ENCODE measurements at regions of chr1 and their contacts with region 1.

Region 1: DNA sequence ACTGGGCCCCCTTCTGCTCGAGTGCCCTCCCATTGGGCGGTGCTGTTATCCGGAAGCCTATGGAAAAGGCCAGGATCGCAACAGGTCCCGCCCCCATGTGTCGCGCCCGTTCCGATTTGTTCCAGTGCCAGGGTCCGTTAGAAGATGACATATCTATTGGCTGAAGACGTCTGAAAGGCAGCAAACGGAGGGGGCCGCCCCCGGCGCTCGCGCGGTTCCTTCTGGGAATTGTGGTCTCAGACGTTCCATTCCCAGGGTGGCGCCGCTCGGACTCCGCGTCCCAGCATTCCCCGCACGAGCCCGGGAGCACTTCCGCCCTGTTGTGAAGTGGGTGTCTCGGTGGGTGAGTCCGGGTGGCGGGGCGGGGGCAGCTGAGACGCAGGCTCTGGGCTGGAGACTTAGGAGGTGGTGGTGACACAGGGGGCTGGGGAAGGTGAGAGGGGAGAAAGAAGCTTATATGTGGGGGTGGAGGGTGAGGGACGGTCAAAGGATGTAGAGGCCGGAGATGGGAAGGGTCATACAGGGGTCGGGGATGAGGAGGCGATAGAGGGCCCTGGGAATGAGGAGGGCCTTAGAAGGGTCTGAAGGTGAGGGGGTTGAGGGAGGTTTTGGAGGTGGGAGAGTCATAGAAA is at the start of gene ZSCAN20:
- DNase-seq: peak; percentile 98
- ATAC-seq: peak; percentile 89
- H3K4me3 ChIP-seq: peak within 1 kb of the TSS; percentile 77
- H3K27ac ChIP-seq: peak within 1 kb of the TSS; percentile 69
- H3K4me1 ChIP-seq: peaks cover 12% of the 10 kb centered on the region
- H3K27me3 ChIP-seq: no peaks in the 10 kb centered on the region
- CTCF ChIP-seq: no peak
- POLR2A ChIP-seq: peak; percentile 82
- RAD21 ChIP-seq: no peak
- total RNA-seq, gene ZSCAN20: 8.1 and 11.1 TPM in 2 replicates

Region 2: DNA sequence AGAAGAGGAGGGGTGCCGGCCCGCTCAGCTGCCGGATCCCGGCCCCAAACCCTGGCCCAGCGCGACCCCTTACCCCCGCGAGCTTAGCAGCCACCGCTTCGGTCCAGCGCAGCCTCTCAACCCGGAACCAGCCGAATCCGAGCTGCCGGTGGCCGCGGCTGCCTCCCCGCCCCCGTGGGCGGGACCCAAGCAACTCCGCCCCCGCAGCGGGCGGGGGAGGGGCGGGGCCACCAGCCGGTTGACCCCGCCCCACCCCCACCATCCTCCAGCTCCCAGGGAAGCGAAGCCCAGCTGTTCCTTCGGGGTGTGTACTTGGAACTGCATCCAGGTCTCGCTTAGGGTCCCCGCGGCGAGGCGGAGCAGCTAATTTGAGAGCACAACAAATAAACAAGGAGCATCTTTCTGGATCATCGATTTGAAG is 290.5 kb before region 1 on chr1 and contains the start of gene TRIM62:
- CTCF ChIA-PET with region 1: no interaction called
- POLR2A ChIA-PET with region 1: no interaction called
- dilution Hi-C with region 1: no loop called
- in situ Hi-C with region 1: no loop called
- intact Hi-C with region 1: loop called (anchors 5 kb)
- DNase-seq: peak; percentile 85
- ATAC-seq: peak; percentile 83
- H3K4me3 ChIP-seq: peak within 1 kb of the TSS; percentile 93
- H3K27ac ChIP-seq: peak within 1 kb of the TSS; percentile 58
- H3K4me1 ChIP-seq: peaks cover 5% of the 10 kb centered on the region
- H3K27me3 ChIP-seq: no peaks in the 10 kb centered on the region
- CTCF ChIP-seq: no peak
- POLR2A ChIP-seq: no peak
- RAD21 ChIP-seq: no peak
- total RNA-seq, gene TRIM62: 2.8 and 3.0 TPM in 2 replicates

Region 3: DNA sequence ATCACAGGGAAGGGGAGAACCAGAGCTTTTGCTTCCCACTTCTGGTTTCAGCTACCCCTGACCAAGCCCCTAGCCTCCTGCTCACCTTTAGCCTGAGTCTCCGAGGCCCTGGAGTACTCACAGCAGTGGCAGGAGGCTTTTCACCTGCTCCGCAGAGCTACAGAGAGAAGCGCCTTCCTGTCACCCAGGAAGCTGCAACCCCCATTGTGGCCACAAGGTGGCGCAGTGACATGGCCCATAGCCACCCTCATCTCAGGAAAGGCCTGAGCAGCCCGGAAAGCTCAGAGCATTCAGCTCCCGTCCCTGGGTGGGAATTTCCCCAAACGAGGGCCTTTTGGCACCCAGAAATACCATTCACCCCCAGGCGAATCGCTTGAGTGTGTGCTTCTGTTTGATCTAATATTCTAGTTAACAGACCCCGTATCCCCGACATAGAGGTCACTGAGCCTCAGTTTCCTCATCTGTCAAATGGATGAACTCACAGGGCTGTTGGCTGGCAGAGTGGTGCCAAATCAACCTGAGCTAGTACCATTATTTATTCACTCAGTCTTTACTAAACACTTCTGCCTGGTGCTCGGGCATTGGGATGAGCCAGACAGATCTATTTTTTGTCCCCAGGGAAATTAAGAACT is 176.9 kb before region 1 on chr1:
- CTCF ChIA-PET with region 1: interaction called, 26 read pairs
- POLR2A ChIA-PET with region 1: no interaction called
- dilution Hi-C with region 1: no loop called
- in situ Hi-C with region 1: loop called (anchors 5 kb)
- intact Hi-C with region 1: loop called (anchors 1 kb)
- DNase-seq: peak; percentile 73
- ATAC-seq: peak; percentile 86
- H3K4me3 ChIP-seq: no peak overlapping the region
- H3K27ac ChIP-seq: no peak overlapping the region
- H3K4me1 ChIP-seq: peaks cover 1% of the 10 kb centered on the region; the same call in 1 of the 2 replicates
- H3K27me3 ChIP-seq: no peaks in the 10 kb centered on the region
- CTCF ChIP-seq: peak; percentile 94
- POLR2A ChIP-seq: 0 out of 2 replicates have a peak, but pooled peaks have one; percentile 32
- RAD21 ChIP-seq: peak; percentile 89

Region 4: GRCh38 chr1:33367485-33368405 is 104.7 kb before region 1 on chr1:
- CTCF ChIA-PET with region 1: no interaction called
- POLR2A ChIA-PET with region 1: no interaction called
- dilution Hi-C with region 1: no loop called
- in situ Hi-C with region 1: no loop called
- intact Hi-C with region 1: loop called (anchors 1 kb)
- DNase-seq: peak; percentile 75
- ATAC-seq: peak; percentile 73
- H3K4me3 ChIP-seq: no peak overlapping the region
- H3K27ac ChIP-seq: no peak overlapping the region
- H3K4me1 ChIP-seq: peaks cover 32% of the 10 kb centered on the region
- H3K27me3 ChIP-seq: no peaks in the 10 kb centered on the region
- CTCF ChIP-seq: peak; percentile 97
- POLR2A ChIP-seq: no peak
- RAD21 ChIP-seq: peak; percentile 99

Region 5: GRCh38 chr1:33460947-33461629 is 11.4 kb before region 1 on chr1:
- CTCF ChIA-PET with region 1: interaction called, 18 read pairs
- POLR2A ChIA-PET with region 1: no interaction called
- dilution Hi-C with region 1: no loop called
- in situ Hi-C with region 1: no loop called
- intact Hi-C with region 1: no loop called
- DNase-seq: no peak
- ATAC-seq: no peak
- H3K4me3 ChIP-seq: no peak overlapping the region
- H3K27ac ChIP-seq: no peak overlapping the region
- H3K4me1 ChIP-seq: peaks cover 11% of the 10 kb centered on the region
- H3K27me3 ChIP-seq: no peaks in the 10 kb centered on the region
- CTCF ChIP-seq: no peak
- POLR2A ChIP-seq: no peak
- RAD21 ChIP-seq: no peak